Vagina (tissue), 2 donors: ENCODE measurements at regions of chr11 and their contacts with region 1.

Region 1: DNA sequence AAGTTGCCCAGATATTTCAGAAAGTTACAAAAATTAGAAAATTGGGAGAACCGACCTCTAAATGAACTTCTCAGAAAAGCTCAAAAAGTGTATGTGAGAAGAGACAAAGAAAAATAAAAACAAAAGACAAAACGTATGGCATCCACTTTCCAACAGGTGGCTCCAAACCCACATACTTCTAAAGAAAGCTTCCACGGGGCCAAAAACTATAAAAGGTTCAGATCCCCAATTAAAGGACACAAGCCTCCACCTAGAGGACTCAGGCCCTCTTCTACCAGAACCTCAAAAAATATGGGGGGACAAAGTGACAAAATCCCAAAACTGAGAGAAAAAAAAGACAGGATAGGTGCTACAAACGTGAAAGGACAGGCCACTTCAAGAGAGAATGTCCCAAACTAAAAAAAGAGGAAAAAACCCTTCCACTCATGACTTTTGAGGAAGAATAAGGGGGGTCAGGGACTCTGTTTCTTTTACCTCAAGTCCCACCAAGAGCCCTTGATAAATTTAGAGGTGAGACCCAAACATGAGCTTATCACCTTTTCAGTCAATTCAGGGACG is 8.8 kb downstream of the SCGB2A1 start:
- DNase-seq: no peak
- H3K4me3 ChIP-seq: no peak overlapping the region
- H3K27ac ChIP-seq: no peak overlapping the region
- H3K4me1 ChIP-seq: no peaks in the 10 kb centered on the region
- H3K27me3 ChIP-seq: no peaks in the 10 kb centered on the region
- CTCF ChIP-seq: peak in 1 of 3 experiments; percentile 5
- POLR2A ChIP-seq: no peak

Region 2: GRCh38 chr11:62013591-62014476 is 203.4 kb before region 1 on chr11:
- intact Hi-C with region 1: loop called (anchors 5 kb)
- DNase-seq: no peak
- H3K4me3 ChIP-seq: no peak overlapping the region
- H3K27ac ChIP-seq: no peak overlapping the region
- H3K4me1 ChIP-seq: no peaks in the 10 kb centered on the region
- H3K27me3 ChIP-seq: no peaks in the 10 kb centered on the region
- CTCF ChIP-seq: no peak
- POLR2A ChIP-seq: no peak

Region 3: DNA sequence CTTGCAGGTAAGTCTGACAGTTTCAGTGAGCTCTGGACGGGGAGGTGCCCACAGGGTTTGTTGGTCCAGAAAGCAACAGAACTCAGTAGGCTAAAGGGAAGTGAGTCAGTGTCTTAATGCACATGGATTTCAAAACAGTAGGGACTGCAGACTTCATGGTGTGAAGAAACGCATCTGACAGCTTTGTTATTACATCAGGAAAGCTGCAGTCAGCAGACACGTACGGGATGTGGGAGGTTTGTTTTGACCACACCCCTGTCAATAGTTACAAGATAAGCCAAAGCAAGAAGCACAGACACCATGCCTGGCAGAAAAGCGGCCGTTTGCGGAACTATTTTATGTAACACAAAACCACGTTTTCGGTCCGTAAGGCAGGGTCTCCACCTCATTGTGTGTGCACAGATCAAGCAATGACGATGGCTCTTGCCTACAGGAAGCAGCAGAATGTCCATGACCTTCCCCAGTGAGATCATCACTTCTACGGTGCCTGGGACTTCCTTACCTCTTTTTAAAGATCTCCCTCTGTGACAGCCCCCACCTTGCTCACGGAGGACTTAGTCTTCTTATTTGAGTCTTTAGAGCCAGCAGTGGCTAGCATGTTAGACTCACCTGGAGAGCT is 191.7 kb before region 1 on chr11:
- intact Hi-C with region 1: no loop called
- DNase-seq: peak in 1 of 2 donors; percentile 94
- H3K4me3 ChIP-seq: no peak overlapping the region
- H3K27ac ChIP-seq: peak overlapping the region; percentile 45
- H3K4me1 ChIP-seq: peaks cover 7% of the 10 kb centered on the region
- H3K27me3 ChIP-seq: no peaks in the 10 kb centered on the region
- CTCF ChIP-seq: no peak
- POLR2A ChIP-seq: no peak

Region 4: GRCh38 chr11:62508268-62509058 is 291.2 kb after region 1 on chr11:
- intact Hi-C with region 1: no loop called
- DNase-seq: no peak
- H3K4me3 ChIP-seq: peak overlapping the region; percentile 19 to 21
- H3K27ac ChIP-seq: peak overlapping the region; percentile 63
- H3K4me1 ChIP-seq: peaks cover 61% of the 10 kb centered on the region
- H3K27me3 ChIP-seq: no peaks in the 10 kb centered on the region
- CTCF ChIP-seq: peak in 2 of 3 experiments; percentile 29 to 40
- POLR2A ChIP-seq: no peak